Activated CD4-positive, alpha-beta T cell treated with anti-CD3 and anti-CD28 coated beads, Interleukin-2, amount 10 ng/mL, durations not matched to agents 7 days and 5 days (primary cell): ENCODE measurements at regions of chr15 and their contacts with region 1.

Region 1: DNA sequence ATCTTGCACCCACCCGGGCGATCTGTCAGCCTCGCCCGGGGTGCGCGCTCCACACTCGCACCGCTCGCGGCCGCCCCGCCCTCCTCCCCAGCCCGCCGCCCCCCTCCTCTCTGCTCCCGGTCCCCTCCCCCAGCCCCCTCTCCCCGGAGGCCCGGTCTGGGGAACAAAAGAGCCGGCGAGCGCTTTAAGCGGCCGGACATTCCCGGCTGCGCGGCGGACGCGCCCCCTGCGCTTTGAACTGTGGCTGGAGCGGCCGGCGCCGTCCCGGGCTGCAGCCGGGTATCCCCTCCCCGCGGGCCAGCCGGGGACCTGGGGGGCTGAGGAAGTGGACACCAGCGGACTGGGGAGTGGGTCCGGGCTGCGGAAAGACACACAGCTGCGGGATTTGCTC is at the start of gene IGDCC3:
- DNase-seq: no peak
- H3K4me3 Mint-ChIP-seq: peak within 1 kb of the TSS; percentile 48
- H3K27ac Mint-ChIP-seq: no peak within 1 kb of the TSS
- H3K4me1 Mint-ChIP-seq: peaks cover 13% of the 10 kb centered on the region
- H3K27me3 Mint-ChIP-seq: peaks cover 73% of the 10 kb centered on the region
- total RNA-seq, gene IGDCC3: not detected

Region 2: DNA sequence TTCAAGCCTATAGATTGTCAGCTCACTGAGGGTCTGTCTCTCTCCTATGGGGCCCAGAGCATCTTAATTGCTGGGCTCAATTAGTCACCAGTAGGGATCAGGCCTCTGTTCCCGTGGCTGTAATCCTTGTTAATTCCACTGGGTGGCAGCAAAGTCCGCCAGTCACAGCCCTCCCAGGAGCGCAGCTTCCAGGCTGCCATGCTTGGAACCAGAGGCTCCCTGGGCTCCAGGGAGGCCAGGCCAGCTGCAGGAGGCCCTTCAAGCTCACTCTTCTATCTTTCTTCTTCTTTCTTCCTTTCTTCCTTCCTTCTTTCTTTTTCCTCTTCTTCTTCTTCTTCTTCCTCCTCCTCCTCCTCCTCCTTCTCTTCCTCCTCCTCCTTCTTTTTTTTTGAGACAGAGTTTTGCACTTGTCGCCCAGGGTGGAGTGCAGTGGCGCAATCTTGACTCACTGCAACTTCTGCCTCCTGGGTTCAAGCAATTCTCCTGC is 59.1 kb before region 1 on chr15:
- CTCF ChIA-PET with region 1: interaction called, 12 read pairs
- POLR2A ChIA-PET with region 1: no interaction called
- DNase-seq: peak; percentile 79
- H3K4me3 Mint-ChIP-seq: no peak overlapping the region
- H3K27ac Mint-ChIP-seq: no peak overlapping the region
- H3K4me1 Mint-ChIP-seq: no peaks in the 10 kb centered on the region
- H3K27me3 Mint-ChIP-seq: peaks cover 13% of the 10 kb centered on the region